Naive thymus-derived CD4-positive, alpha-beta T cell (primary cell): ENCODE measurements at regions of chr17 and their contacts with region 1.

Region 1: DNA sequence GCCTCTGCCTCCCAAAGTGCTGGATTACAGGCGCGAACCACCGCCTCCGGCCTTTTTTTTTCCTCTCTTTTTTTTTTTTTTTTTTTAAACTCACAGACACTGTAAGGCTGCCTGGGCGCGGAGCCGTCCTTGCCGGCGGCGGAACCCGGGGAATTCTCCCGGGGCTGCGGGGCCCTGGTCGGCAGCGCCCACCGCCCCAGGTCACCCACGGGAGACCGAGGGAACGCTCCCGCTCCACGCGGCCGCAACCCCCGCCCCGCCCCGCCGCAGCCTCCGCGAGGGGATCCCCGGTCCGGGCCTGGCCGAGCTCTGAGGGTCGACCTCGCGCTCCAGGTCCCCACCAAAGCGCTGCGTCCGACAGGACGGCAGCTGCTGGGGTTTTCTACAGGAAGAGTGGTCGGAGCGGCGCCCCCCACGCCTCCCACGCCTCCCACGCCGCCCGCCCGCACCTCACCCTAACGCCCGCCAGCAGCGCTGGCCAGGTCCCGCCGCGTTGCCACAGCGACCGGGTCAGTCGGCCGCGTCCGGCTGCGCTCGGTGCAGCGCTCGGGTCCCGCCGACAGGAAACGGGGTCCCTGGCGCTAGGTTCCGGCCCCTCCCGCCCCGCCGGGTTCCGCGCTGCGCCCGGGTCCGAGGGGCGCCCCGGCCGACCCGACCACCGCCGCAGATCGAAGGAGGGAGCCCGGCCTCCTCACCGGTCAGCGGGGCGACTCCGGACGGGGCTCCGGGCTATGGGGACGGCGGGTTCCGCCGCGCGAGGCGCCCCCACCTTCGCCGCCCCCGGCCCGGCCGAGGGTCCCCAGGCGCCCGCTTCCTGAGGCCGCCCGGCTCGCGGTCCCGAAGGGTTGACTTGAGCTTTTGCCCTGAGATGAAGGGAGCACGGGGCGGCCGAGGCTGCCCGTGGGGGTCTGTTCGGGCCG is at the start of gene CCDC57:
- DNase-seq: peak in 2 of 9 donors; percentile 52 to 83
- ATAC-seq: peak; percentile 61
- H3K4me3 ChIP-seq: peak within 1 kb of the TSS; percentile 68
- H3K4me3 Mint-ChIP-seq: peak within 1 kb of the TSS; percentile 70 to 86 (median 82)
- H3K27ac ChIP-seq: peak within 1 kb of the TSS; percentile 82
- H3K27ac Mint-ChIP-seq: peak within 1 kb of the TSS; percentile 41 to 88 (median 79)
- H3K4me1 ChIP-seq: peaks cover 23 to 31% of the 10 kb centered on the region in 2 donors
- H3K4me1 Mint-ChIP-seq: peaks cover 5 to 45% (median 35%) of the 10 kb centered on the region in 7 donors
- H3K27me3 ChIP-seq: no peaks in the 10 kb centered on the region
- H3K27me3 Mint-ChIP-seq: peaks cover 0 to 2% (median 0%) of the 10 kb centered on the region in 5 donors
- total RNA-seq, gene CCDC57: 75.7 to 127 (median 95.0) TPM

Region 2: GRCh38 chr17:82180776-82181528 is 31.6 kb before region 1 on chr17:
- CTCF ChIA-PET with region 1: no interaction called
- POLR2A ChIA-PET with region 1: no interaction called
- intact Hi-C with region 1: no loop called
- DNase-seq: no peak
- ATAC-seq: no peak
- H3K4me3 ChIP-seq: no peak overlapping the region
- H3K4me3 Mint-ChIP-seq: no peak overlapping the region
- H3K27ac ChIP-seq: no peak overlapping the region
- H3K27ac Mint-ChIP-seq: no peak overlapping the region
- H3K4me1 ChIP-seq: no peaks in the 10 kb centered on the region
- H3K4me1 Mint-ChIP-seq: no peaks in the 10 kb centered on the region
- H3K27me3 ChIP-seq: no peaks in the 10 kb centered on the region
- H3K27me3 Mint-ChIP-seq: no peaks in the 10 kb centered on the region

Region 3: DNA sequence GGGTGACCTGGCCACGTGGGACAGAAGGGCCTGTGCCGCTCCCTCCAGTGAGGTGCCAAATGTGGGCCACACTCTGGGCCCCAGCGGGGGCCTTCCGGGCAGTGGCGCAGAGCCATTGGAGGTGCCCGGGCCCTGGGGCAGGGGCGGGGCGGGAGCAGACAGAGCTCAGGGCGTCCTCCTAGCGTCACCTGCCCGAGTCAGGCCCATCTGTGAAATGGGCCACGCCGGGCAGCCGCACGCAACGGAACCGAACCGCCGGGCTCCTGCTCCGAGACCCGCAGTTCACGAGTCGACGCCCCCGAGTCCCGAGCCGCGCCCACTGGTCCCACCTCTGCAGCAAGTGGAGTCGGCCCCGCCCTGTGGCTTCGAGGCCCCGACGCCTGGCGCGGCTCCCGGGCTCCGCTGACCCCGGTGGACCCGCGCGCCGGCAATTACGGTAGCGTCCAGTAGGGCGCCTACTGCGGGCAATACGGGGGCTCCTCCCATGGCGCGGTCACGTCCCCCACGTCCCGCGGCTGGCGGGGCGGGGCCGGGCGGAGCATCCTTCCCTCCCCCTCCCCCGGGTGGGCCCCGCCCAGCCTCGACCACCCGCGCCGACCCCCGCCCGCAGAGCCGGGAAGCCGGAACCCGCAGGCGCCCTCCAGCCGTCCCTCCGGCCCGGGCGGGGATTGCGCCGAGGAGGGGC is 18.2 kb after region 1 on chr17:
- CTCF ChIA-PET with region 1: interaction called, 4 read pairs
- POLR2A ChIA-PET with region 1: interaction called, 7 read pairs
- intact Hi-C with region 1: loop called (anchors 1 kb)
- DNase-seq: peak in 2 of 9 donors; percentile 47 to 82
- ATAC-seq: peak; percentile 58
- H3K4me3 ChIP-seq: peak overlapping the region; percentile 35
- H3K4me3 Mint-ChIP-seq: peak overlapping the region in 7 of 10 donors; percentile 74 to 96 (median 79)
- H3K27ac ChIP-seq: peak overlapping the region; percentile 57
- H3K27ac Mint-ChIP-seq: no peak overlapping the region
- H3K4me1 ChIP-seq: peaks cover 26 to 32% of the 10 kb centered on the region in 2 donors
- H3K4me1 Mint-ChIP-seq: peaks cover 6 to 23% (median 10%) of the 10 kb centered on the region in 7 donors
- H3K27me3 ChIP-seq: no peaks in the 10 kb centered on the region
- H3K27me3 Mint-ChIP-seq: no peaks in the 10 kb centered on the region